ENCODE measurements at regions of chr22 and their contacts with region 1.

Region 1: DNA sequence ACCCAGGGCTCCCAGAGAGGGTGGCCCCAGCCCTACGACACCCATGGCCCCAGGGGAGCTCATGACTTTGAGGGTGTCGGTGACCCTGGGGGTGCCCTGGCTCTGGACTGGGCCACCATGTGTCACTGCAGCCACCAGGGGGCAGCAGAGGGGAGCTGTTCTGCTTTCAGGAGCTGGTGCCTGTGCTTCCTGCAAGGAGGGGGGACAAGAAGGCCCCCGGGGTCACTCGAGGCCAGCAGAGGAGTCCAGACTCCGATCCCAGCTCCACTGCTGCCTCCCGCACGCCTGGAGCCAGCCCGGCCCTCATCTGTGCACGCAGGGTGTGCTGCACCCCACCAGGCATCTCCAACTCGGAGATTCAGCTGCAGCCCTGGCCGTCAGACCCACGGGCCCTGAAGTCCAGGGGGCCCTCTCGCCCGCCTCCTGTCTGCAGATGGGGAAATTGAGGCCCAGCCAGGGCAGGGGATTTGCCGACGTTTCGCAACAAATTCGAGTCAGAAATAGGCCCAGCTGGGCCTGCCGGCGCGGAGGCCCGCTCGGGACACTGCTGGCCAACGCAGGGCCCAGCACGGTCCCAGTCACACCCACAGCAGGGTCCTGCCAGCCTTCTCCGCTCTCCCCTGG is 29.5 kb upstream of the WNT7B start:
- DNase-seq: peak; percentile 83 to 98 (median 92)
- ATAC-seq: peak; percentile 88
- H3K4me3 ChIP-seq: peak overlapping the region in 1 of 2 donors; percentile 29
- H3K27ac ChIP-seq: peak overlapping the region; percentile 86 to 91
- H3K4me1 ChIP-seq: peaks cover 23 to 62% of the 10 kb centered on the region in 2 donors
- H3K27me3 ChIP-seq: no peaks in the 10 kb centered on the region
- CTCF ChIP-seq: peak; percentile 93 to 98

Region 2: DNA sequence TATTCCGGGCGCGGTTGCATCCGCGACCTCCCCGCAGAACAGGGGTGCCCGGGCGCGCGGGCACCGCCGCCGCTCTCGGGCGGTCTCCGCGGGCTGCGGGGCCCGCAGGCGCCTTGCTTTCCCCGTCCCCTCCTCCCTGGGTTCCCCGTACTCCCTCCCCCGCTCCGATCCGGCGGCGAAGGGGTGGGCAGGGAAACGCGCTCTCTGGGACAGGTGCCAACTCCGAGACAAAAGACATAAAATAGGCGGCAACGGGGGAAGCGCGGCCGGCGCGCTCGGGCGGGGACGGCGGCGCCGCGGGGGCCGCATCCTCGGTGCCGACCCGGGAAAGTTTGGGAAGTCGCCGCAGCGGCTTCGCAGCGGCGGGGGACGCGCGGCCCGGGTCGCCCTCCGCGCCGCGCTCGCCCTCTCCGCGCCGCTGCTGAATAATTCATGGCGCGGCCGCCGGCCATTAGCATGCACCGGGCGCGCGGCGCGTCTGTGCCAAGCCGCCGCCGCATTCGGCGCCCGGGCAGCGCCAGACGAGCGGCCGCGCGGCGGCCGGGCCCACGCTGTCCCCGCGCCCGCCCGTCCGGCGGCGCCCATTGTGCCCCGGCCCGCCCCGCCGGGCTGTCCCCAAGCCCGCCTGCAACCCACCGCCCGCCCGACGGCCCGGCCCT is 65.1 kb after region 1 on chr22:
- intact Hi-C with region 1: loop called in 1 of 2 experiments (anchors 10 kb)
- DNase-seq: peak; percentile 92 to 96 (median 94)
- ATAC-seq: peak; percentile 24
- H3K4me3 ChIP-seq: peak overlapping the region; percentile 75 to 77
- H3K27ac ChIP-seq: peak overlapping the region; percentile 97 to 98
- H3K4me1 ChIP-seq: peaks cover 32 to 79% of the 10 kb centered on the region in 2 donors
- H3K27me3 ChIP-seq: no peaks in the 10 kb centered on the region
- CTCF ChIP-seq: no peak

Region 3: GRCh38 chr22:46116491-46116958 is 110.0 kb after region 1 on chr22:
- intact Hi-C with region 1: loop called in 1 of 2 experiments (anchors 5 kb)
- DNase-seq: peak; percentile 82 to 97 (median 92)
- ATAC-seq: peak; percentile 87
- H3K4me3 ChIP-seq: no peak overlapping the region
- H3K27ac ChIP-seq: peak overlapping the region; percentile 47 to 58
- H3K4me1 ChIP-seq: peaks cover 4 to 26% of the 10 kb centered on the region in 2 donors
- H3K27me3 ChIP-seq: no peaks in the 10 kb centered on the region
- CTCF ChIP-seq: peak; percentile 51 to 80

Measured in left lung (tissue), 14 donors.